ENCODE measurements at regions of chr6 and their contacts with region 1.

Region 1: DNA sequence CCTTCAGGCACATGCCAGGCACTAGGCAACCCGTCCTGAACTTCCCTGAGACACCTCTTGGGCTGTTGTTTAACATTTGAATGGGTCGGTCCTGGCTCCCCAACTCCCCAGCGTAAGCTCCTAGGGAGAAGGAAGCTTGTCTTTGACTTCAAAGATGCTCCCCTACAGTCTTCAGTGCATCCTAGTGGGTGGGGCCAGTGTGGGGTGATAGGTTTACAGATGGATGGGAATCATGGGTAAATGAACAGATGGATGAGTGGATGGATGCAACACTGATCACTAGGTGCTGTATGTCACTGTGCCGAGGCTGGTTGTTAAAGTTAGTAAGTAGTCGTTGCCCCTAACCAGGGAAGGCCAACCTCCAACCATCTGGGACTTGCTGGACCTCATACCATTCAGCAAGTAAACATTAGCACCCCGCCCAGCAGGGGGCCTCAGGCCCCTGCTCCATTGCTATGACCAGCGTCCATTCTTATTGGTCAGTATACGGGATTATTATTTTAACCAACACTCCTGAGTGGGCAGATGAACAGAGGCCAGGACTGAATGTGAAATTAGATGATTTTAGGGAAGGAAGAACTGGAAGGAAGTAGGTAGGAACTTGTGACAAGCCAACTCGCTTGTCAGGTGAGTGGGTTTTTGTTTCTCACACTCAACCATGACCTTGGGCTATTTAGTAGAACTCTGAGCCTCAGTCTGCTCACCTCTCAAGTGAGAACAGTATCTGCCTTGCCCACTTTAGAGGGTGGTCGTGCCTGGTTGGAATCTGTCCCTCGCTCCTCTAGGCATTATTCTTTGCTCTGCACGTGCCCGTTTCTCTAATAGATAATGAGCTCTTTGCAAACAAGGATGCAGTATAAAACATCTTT is 82.9 kb upstream of the FOXP4 start:
- DNase-seq: peak; percentile 77
- ATAC-seq: peak; percentile 92
- H3K4me3 ChIP-seq: peak overlapping the region in 1 of 3 experiments; percentile 24; a peak in 1 of 6 replicates
- H3K27ac ChIP-seq: no peak overlapping the region
- H3K4me1 ChIP-seq: peaks cover 58% of the 10 kb centered on the region
- H3K27me3 ChIP-seq: peaks cover 0 to 24% of the 10 kb centered on the region in 2 experiments
- CTCF ChIP-seq: peak; percentile 90
- EP300 ChIP-seq: no peak; a peak in 1 of 4 replicates
- POLR2A ChIP-seq: no peak
- RAD21 ChIP-seq: peak; percentile 95

Region 2: GRCh38 chr6:41527721-41528590 is 64.7 kb after region 1 on chr6:
- CTCF ChIA-PET with region 1: no interaction called
- POLR2A ChIA-PET with region 1: no interaction called
- in situ Hi-C with region 1: no loop called
- intact Hi-C with region 1: loop called (anchors 1 kb)
- DNase-seq: peak; percentile 41
- ATAC-seq: peak; percentile 22
- H3K4me3 ChIP-seq: peak overlapping the region; percentile 23 to 49 (median 25); a peak in 2 of 6 replicates
- H3K27ac ChIP-seq: peak overlapping the region; percentile 18
- H3K4me1 ChIP-seq: peaks cover 70% of the 10 kb centered on the region
- H3K27me3 ChIP-seq: no peaks in the 10 kb centered on the region
- CTCF ChIP-seq: no peak
- EP300 ChIP-seq: no peak
- POLR2A ChIP-seq: no peak
- RAD21 ChIP-seq: no peak

Region 3: DNA sequence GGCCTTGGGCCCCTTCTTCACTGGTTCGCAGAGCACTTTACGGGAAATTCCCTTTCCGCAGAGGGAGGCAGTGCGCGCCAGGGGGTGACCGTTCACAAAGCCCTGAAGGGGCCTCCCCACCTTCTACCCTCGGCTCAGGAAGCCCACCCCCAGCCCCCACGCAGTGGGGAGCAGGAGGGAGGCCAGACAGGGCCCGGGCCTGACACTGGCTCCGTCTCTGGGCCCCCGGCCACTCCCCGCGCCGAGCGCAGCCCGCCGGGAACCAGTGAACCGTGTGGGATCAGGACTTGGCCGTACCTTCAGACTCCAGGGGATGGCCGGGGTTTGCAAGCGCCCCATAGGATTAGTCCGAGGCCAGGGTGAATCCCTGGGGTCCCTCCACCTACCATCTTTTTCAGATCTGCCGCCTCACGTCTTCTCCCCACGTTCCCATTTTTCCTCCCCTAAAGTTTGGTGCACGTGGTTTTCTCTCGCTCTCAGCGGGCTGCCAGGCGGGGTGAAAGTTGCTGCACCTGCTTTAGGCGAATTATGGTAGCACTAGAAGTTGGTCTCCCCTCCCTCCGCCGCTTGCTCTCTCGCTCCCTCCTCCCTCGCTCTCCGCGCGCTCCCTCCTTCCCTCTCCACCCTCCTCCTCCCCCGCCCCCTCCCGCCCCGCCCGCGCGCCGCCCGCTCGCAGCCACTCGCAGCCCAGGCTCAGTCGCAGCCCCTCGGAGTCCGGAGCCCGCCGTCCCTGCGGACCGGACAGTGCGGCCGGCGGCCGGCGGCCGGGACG is 82.6 kb after region 1 on chr6 and contains the start of gene FOXP4:
- CTCF ChIA-PET with region 1: no interaction called
- POLR2A ChIA-PET with region 1: interaction called, 7 read pairs
- in situ Hi-C with region 1: no loop called
- intact Hi-C with region 1: loop called (anchors 2 kb)
- DNase-seq: peak; percentile 91
- ATAC-seq: peak; percentile 75
- H3K4me3 ChIP-seq: peak within 1 kb of the TSS; percentile 67 to 99 (median 99)
- H3K27ac ChIP-seq: peak within 1 kb of the TSS; percentile 66
- H3K4me1 ChIP-seq: peaks cover 48% of the 10 kb centered on the region
- H3K27me3 ChIP-seq: no peaks in the 10 kb centered on the region
- CTCF ChIP-seq: 0 out of 2 replicates have a peak, but pooled peaks have one; percentile 8
- EP300 ChIP-seq: 0 out of 4 replicates have a peak, but pooled peaks of 1 of the 2 experiments have one; percentile 43
- POLR2A ChIP-seq: no peak
- RAD21 ChIP-seq: peak; percentile 47; the same call in 1 of the 2 replicates
- total RNA-seq, gene FOXP4: 11.0 TPM in 2 replicates

Region 4: DNA sequence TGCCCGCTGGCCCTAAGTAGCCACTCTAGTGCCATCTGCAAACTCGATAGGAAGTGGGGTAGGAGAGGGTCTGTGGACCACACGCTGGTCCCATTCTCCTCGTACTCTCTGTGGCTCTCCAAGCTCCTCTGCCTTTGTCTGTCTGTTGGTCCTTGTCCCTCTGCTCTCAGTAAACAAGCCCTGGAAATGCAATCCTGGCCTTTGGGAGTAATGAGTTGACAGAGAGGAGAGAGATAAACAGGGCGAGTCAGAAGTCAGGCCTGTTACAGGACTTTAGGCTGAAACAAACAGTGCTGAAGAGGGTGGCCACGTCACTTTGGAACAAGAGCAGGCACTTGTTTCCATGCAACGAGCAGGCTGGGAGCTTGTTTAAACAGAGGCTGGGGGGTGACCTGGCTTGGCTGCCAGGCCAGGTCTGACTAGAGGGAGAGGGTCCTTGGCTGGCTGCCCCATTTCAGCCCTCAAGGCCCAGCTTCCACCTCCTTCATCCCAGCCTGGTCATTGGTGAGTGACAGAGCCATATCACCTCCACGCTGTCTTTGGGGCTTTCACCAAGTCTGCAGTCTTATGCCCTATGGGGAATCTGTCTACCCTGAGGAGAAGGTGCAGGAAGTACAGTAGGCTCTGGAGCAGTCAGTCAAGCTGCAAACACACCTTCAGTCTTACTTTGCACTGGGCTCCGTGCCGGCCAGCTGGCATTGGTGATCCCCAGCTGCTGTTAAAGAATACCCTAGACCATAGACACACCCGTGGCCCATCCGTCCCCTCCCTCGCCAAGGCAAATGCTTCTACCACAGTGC is 105.5 kb after region 1 on chr6:
- CTCF ChIA-PET with region 1: no interaction called
- POLR2A ChIA-PET with region 1: interaction called, 3 read pairs
- in situ Hi-C with region 1: no loop called
- intact Hi-C with region 1: loop called (anchors 1 kb)
- DNase-seq: peak; percentile 99
- ATAC-seq: peak; percentile 97
- H3K4me3 ChIP-seq: peak overlapping the region in 1 of 3 experiments; percentile 14; a peak in 1 of 6 replicates
- H3K27ac ChIP-seq: peak overlapping the region; percentile 84
- H3K4me1 ChIP-seq: peaks cover 73% of the 10 kb centered on the region
- H3K27me3 ChIP-seq: no peaks in the 10 kb centered on the region
- CTCF ChIP-seq: peak; percentile 40; the same call in 1 of the 2 replicates
- EP300 ChIP-seq: peak in 1 of 2 experiments; percentile 95; a peak in 3 of 4 replicates
- POLR2A ChIP-seq: peak in 1 of 2 experiments; percentile 11; a peak in 1 of 4 replicates
- RAD21 ChIP-seq: peak; percentile 37; the same call in 1 of the 2 replicates

Region 5: GRCh38 chr6:41591859-41592502 is 128.7 kb after region 1 on chr6:
- CTCF ChIA-PET with region 1: interaction called, 66 read pairs
- POLR2A ChIA-PET with region 1: interaction called, 7 read pairs
- in situ Hi-C with region 1: loop called (anchors 5 kb)
- intact Hi-C with region 1: loop called (anchors 1 kb)
- DNase-seq: peak; percentile 65
- ATAC-seq: peak; percentile 73
- H3K4me3 ChIP-seq: no peak overlapping the region
- H3K27ac ChIP-seq: no peak overlapping the region
- H3K4me1 ChIP-seq: peaks cover 19% of the 10 kb centered on the region
- H3K27me3 ChIP-seq: no peaks in the 10 kb centered on the region
- CTCF ChIP-seq: peak; percentile 95
- EP300 ChIP-seq: no peak
- POLR2A ChIP-seq: no peak
- RAD21 ChIP-seq: peak; percentile 97

Region 6: GRCh38 chr6:41683510-41684310 is 220.4 kb after region 1 on chr6:
- CTCF ChIA-PET with region 1: no interaction called
- POLR2A ChIA-PET with region 1: no interaction called
- in situ Hi-C with region 1: loop called (anchors 5 kb)
- intact Hi-C with region 1: no loop called
- DNase-seq: peak; percentile 57
- ATAC-seq: peak; percentile 87
- H3K4me3 ChIP-seq: peak overlapping the region in 2 of 3 experiments; percentile 36 to 60; a peak in 4 of 6 replicates
- H3K27ac ChIP-seq: no peak overlapping the region
- H3K4me1 ChIP-seq: peaks cover 26% of the 10 kb centered on the region
- H3K27me3 ChIP-seq: peaks cover 7 to 23% of the 10 kb centered on the region in 2 experiments; a peak in 3 of 5 replicates
- CTCF ChIP-seq: peak; percentile 100
- EP300 ChIP-seq: no peak
- POLR2A ChIP-seq: no peak
- RAD21 ChIP-seq: peak; percentile 97

Measured in HepG2 (cell line).